ENCODE measurements at regions of chr21 and their contacts with region 1.

Region 1: DNA sequence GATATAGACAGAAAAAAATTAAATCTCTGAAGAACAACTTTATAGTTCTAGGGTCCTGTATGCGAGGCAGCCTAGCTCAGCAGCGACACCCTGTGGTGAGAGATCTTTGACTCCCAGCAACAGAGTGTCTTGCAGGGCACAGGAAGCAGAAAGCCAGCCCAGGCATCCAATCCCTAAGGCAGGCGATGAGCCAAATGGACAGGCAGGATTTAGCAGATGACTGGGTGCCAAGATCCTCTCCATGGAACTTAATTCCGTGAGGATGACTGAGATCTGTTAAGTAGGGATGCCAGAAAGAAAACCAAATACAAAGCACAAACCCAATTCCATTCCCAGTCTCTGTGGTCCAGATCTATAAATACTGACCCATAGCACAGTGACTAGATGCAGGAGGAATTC is 38.8 kb downstream of the HLCS start:
- DNase-seq: peak; percentile 78 to 79
- H3K4me3 ChIP-seq: no peak overlapping the region
- H3K4me3 Mint-ChIP-seq: no peak overlapping the region
- H3K27ac Mint-ChIP-seq: no peak overlapping the region
- H3K4me1 ChIP-seq: peaks cover 11% of the 10 kb centered on the region; the same call in 1 of the 2 replicates
- H3K4me1 Mint-ChIP-seq: peaks cover 20% of the 10 kb centered on the region
- H3K27me3 ChIP-seq: no peaks in the 10 kb centered on the region
- H3K27me3 Mint-ChIP-seq: no peaks in the 10 kb centered on the region
- CTCF ChIP-seq: peak; percentile 87 to 88

Region 2: DNA sequence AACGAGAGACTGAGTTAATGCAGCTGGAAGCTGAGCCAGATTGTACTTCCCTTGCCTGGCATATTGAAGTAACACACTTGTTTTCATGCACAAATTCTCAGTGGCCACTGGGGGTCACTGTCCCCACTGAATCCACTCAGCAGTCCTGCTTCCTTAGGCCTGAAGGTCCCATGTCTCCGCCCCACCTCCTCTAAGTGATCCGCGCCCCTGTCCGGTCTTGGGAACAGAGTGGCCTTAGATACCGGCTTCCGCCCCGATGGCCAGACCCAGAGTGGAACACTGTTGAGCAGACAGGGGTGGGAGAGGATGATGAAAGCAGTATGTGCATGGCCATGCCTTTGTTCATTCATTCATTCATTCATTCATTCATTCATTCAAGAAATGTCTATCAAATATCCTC is 507.7 kb before region 1 on chr21:
- CTCF ChIA-PET with region 1: no interaction called
- POLR2A ChIA-PET with region 1: no interaction called
- intact Hi-C with region 1: loop called (anchors 5 kb)
- DNase-seq: peak; percentile 77 to 80
- H3K4me3 ChIP-seq: no peak overlapping the region
- H3K4me3 Mint-ChIP-seq: no peak overlapping the region
- H3K27ac Mint-ChIP-seq: no peak overlapping the region
- H3K4me1 ChIP-seq: no peaks in the 10 kb centered on the region
- H3K4me1 Mint-ChIP-seq: no peaks in the 10 kb centered on the region
- H3K27me3 ChIP-seq: no peaks in the 10 kb centered on the region
- H3K27me3 Mint-ChIP-seq: no peaks in the 10 kb centered on the region
- CTCF ChIP-seq: peak; percentile 65 to 80

Region 3: DNA sequence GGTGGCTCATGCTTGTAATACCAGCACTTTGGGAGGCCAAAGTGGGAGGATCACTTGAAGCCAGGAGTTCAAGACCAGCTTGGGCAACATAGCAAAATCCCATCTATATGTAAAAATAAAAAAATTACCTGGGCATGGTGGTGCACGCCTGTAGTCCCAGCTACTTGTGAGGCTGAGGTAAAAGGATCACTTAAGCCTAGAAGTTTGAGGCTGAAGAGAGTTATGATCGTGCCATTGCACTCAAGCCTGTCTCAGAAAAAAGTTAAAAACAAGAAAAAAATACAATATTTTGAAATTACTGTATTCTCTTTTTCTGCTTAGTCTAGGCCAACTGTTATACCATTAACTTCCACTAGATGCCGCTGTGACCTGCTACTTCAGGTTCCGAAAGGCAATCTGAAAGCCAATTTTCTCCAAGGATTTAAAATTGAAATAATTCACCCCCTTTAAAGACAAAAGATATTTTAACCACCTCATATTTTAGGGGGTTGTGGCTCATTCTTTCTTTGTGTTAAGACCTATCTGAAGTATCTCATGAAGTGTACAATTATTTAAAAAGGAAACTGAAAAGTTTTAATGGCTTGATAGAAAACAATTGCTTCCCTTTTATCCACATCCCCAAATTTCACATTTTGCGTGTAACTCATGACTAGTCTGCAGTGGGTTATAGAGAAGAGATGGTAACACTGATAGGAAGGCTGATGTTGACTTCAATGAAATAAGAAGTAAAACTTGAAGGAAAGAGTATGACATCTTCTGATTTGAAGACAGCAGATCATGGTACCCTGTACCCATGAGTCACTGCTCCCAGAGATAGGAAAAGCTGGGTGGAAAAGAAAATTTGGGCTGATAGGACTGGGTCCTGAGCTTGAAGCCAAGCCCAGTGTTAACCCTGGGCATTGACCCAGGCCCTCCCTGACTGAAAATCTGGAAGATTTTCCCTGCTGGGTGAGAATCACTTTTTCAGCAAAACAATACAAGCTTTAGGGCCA is 423.4 kb before region 1 on chr21:
- CTCF ChIA-PET with region 1: no interaction called
- POLR2A ChIA-PET with region 1: no interaction called
- intact Hi-C with region 1: loop called (anchors 1 kb)
- DNase-seq: peak in 1 of 2 experiments; percentile 41
- H3K4me3 ChIP-seq: no peak overlapping the region
- H3K4me3 Mint-ChIP-seq: no peak overlapping the region
- H3K27ac Mint-ChIP-seq: no peak overlapping the region
- H3K4me1 ChIP-seq: no peaks in the 10 kb centered on the region
- H3K4me1 Mint-ChIP-seq: peaks cover 11% of the 10 kb centered on the region
- H3K27me3 ChIP-seq: no peaks in the 10 kb centered on the region
- H3K27me3 Mint-ChIP-seq: no peaks in the 10 kb centered on the region
- CTCF ChIP-seq: peak; percentile 76 to 81

Region 4: DNA sequence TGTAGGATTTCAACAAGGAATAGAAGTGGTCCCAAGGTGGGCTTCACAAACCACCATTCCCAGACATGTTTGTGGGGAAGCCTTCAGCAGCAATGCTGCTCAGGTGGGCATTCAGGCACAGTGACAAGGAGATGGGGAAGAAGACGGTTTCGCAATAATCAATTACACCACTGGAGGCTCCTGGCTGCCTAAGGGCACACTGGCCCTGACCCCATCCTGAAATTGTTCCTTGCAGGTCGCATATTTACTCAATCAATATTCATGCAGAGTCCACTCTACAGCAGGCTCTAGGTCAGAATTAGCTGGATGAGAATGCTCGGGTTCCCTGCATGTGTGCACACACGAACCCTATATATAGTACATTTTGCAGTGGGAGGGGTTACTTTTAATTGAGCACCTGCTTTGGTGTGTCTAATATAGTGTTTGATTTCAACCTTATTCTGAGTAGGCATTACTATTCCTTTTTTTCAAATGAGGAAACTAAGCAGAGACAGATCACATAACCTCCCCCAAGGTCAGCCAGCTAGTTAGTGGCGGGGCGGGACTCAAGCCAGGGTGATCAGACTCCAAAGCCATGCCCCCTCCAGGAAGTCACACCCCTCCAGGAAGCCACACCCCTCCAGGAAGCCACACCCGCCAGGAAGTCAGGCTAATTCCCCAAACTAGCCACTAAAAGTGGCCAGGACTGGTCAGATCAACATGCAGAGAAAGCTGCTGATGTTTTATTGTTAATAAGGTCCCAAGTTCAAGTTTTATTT is 67.8 kb before region 1 on chr21:
- CTCF ChIA-PET with region 1: no interaction called
- POLR2A ChIA-PET with region 1: no interaction called
- intact Hi-C with region 1: loop called (anchors 5 kb)
- DNase-seq: peak; percentile 71 to 85
- H3K4me3 ChIP-seq: no peak overlapping the region
- H3K4me3 Mint-ChIP-seq: no peak overlapping the region
- H3K27ac Mint-ChIP-seq: no peak overlapping the region
- H3K4me1 ChIP-seq: peaks cover 37% of the 10 kb centered on the region
- H3K4me1 Mint-ChIP-seq: peaks cover 25% of the 10 kb centered on the region
- H3K27me3 ChIP-seq: no peaks in the 10 kb centered on the region
- H3K27me3 Mint-ChIP-seq: no peaks in the 10 kb centered on the region
- CTCF ChIP-seq: no peak